ENCODE measurements at regions of chr17 and their contacts with region 1.

Region 1: DNA sequence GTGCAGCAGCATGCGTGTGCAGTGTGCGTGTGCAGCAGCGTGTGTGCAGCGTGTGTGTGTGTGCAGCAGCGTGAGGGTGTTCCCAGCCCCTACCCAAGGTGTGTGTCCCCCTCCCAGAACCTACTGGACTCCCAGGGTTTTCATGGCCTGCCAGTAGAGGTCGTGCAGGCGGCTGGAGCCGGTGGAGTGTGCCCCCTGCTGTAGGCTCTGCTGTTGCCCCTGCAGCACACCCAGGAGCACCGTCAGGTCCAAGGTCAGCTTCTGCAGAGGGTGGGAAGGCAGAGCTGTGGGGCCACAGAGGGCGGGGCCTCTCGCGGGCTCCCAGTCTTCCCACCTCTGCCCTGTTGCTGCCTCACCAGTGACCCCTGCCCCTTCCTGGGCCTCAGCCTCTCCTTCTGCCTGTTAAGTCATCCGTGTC is 15.0 kb downstream of the MYBBP1A start:
- DNase-seq: peak in 1 of 4 donors; percentile 32
- ATAC-seq: peak; percentile 7
- H3K4me3 ChIP-seq: no peak overlapping the region
- H3K27ac ChIP-seq: peak overlapping the region; percentile 35 to 57
- H3K4me1 ChIP-seq: peaks cover 6 to 61% of the 10 kb centered on the region in 2 donors
- H3K27me3 ChIP-seq: no peaks in the 10 kb centered on the region
- CTCF ChIP-seq: no peak

Region 2: GRCh38 chr17:4420692-4421131 is 119.5 kb before region 1 on chr17:
- intact Hi-C with region 1: loop called in 1 of 2 experiments (anchors 10 kb)
- DNase-seq: peak in 3 of 4 donors; percentile 40 to 81 (median 62)
- ATAC-seq: peak; percentile 95
- H3K4me3 ChIP-seq: no peak overlapping the region
- H3K27ac ChIP-seq: no peak overlapping the region
- H3K4me1 ChIP-seq: peaks cover 0 to 6% of the 10 kb centered on the region in 2 donors
- H3K27me3 ChIP-seq: no peaks in the 10 kb centered on the region
- CTCF ChIP-seq: peak; percentile 80 to 83

Measured in left lung (tissue), 14 donors.